Aorta (tissue), 5 donors: ENCODE measurements at regions of chr5 and their contacts with region 1.

Region 1: DNA sequence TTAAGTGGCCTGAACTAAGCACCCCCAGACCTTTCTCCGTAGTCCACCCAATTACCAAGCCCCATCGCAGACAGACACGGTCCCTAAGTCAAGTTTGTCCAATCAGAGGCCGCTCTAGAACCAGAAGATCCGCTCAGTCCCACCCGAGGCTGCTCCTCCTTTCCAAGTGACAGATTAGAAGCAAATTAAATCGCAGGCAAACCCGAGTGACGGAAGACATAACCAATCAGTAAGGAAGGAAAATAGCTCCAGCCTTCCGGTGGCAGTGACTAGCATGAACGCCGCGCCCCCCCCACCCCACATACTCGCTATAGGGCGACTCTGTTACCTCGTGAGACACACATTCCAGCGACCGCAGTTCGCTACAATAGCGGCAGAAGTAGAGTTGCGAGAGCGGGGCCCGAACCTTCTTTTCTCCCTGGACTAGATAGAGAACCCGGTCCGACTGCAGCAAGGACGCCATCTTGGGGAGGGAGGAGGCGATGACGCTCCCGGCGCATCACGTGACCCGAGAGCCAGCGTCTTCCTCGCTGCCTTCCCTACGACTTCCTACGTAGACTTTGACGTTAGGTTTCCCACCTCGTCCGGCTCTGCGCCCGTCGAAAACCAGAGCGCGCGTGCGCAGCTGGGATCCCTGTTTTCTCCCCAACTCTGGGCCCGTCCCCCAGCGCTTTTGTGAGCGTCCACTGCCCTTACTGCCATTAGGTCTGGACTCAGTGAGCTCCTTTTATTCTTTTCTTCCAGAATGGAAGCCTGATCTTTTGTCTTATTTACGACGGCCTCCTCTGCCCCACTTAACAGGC is at the start of gene DCTN4:
- DNase-seq: peak; percentile 98 to 99
- ATAC-seq: peak; percentile 96
- H3K4me3 ChIP-seq: peak within 1 kb of the TSS; percentile 69 to 84
- H3K27ac ChIP-seq: peak within 1 kb of the TSS; percentile 76 to 94
- H3K4me1 ChIP-seq: peaks cover 0 to 3% of the 10 kb centered on the region in 2 donors
- H3K27me3 ChIP-seq: no peaks in the 10 kb centered on the region
- total RNA-seq, gene DCTN4: 58.9 to 66.4 TPM

Region 2: GRCh38 chr5:150778517-150779396 is 20.0 kb after region 1 on chr5 and contains the start of gene SMIM3:
- intact Hi-C with region 1: loop called in 1 of 2 experiments (anchors 2 kb)
- DNase-seq: peak; percentile 91 to 95
- ATAC-seq: peak; percentile 89
- H3K4me3 ChIP-seq: peak within 1 kb of the TSS; percentile 46 to 96
- H3K27ac ChIP-seq: peak within 1 kb of the TSS; percentile 80 to 90
- H3K4me1 ChIP-seq: peaks cover 6 to 10% of the 10 kb centered on the region in 2 donors
- H3K27me3 ChIP-seq: no peaks in the 10 kb centered on the region
- total RNA-seq, gene SMIM3: 45.3 to 47.6 TPM